CD4-positive, alpha-beta T cell (primary cell): ENCODE measurements at regions of chr11 and their contacts with region 1.

Region 1: DNA sequence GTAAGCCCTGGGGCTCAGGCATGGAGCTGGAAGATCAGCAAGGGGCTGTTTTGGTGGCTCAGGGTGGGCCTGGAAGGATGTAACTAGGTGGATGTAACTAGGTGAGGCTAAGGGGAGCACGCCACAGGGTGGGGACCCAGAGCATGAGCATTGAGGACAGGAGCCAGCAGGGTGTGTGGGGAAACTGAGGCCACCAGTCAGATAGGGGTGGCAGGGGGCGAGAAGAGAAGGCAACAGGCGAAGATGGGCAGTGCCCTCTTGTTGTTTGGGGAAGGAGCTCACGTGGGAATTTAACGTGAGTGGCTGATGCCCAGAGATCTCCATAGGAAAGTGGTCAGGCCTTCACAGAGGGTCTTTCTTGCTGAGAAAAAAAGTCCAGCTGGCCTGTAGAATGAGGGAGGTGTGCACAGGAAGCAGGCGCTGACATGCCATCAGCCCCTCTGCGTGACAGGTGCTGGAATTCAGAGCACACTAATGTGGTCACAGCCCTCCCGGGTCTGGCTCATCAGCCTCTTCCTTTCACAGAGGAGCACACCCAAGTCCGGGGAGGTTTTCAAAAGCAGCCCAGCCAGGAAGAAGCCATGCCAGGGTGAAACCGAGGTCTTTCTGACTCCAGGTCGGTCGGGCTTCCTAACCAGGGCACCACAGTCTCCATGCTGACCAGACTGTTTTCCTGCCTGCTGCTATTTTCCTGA is 54.6 kb upstream of the PAX6 start:
- DNase-seq: no peak
- ATAC-seq: no peak
- H3K4me3 ChIP-seq: no peak overlapping the region
- H3K4me3 Mint-ChIP-seq: no peak overlapping the region
- H3K27ac ChIP-seq: no peak overlapping the region
- H3K27ac Mint-ChIP-seq: no peak overlapping the region
- H3K4me1 ChIP-seq: no peaks in the 10 kb centered on the region
- H3K4me1 Mint-ChIP-seq: no peaks in the 10 kb centered on the region
- H3K27me3 ChIP-seq: peaks cover 3 to 8% of the 10 kb centered on the region in 2 experiments
- H3K27me3 Mint-ChIP-seq: peaks cover 58% of the 10 kb centered on the region
- CTCF ChIP-seq: no peak

Region 2: DNA sequence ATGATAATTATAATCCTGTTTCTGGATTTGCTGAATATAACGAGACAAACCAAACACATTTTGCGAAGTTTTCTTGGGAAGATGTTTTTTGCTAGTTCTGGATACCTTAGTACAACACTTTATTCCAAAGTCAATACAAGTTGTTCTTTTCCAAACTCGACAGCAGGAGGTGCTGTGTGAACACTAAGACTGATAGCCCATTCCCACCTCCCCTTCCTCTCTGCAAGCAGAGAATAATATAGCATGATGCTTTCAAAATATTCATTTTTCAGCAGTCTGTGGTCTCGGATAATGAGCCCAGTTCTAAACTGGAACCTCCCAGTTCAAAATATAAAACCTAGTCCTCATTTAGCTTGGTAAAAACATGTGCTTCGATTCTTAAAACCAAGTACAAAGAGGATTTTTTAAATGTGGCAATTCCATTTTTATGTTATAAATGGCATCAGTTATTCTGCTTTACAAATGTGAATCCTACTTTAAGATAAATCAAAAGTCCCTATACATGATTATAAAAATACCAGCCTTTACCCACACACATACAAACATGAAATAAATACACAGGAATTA is 625.3 kb before region 1 on chr11:
- CTCF ChIA-PET with region 1: interaction called, 3 read pairs
- POLR2A ChIA-PET with region 1: no interaction called
- intact Hi-C with region 1: loop called (anchors 2 to 5 kb)
- DNase-seq: peak in 7 of 14 experiments; percentile 0 to 59 (median 27)
- ATAC-seq: no peak
- H3K4me3 ChIP-seq: no peak overlapping the region
- H3K4me3 Mint-ChIP-seq: no peak overlapping the region
- H3K27ac ChIP-seq: no peak overlapping the region
- H3K27ac Mint-ChIP-seq: no peak overlapping the region
- H3K4me1 ChIP-seq: no peaks in the 10 kb centered on the region
- H3K4me1 Mint-ChIP-seq: no peaks in the 10 kb centered on the region
- H3K27me3 ChIP-seq: no peaks in the 10 kb centered on the region
- H3K27me3 Mint-ChIP-seq: peaks cover 5% of the 10 kb centered on the region
- CTCF ChIP-seq: peak; percentile 64

Region 3: DNA sequence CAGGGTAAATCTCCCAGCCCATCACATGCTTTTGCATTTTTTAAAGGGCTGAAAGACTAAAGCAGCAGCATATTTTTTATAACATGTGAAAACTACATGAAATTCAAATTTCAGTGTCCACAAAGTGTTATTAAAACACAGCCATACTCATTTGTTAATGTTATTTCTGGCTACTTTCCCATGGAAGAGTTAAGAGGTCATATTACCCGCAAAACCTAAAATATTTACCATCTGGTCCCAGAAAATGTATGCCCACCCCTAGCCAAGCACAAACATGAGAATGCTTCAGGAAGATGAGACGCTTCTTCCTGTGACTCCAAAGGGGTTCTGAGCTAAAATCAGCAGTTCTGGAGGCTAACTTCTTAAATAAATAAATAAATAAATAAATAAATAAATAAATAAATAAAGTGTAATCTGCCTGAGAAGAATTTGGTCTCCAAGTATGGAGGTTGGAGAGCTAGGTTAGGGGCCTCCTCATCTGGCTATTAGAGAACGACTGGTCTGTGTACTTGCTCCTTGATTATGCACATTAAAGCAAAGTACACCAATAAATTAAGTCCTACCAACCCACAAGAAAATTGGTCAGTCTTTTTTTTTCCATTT is 366.1 kb before region 1 on chr11:
- CTCF ChIA-PET with region 1: no interaction called
- POLR2A ChIA-PET with region 1: no interaction called
- intact Hi-C with region 1: no loop called
- DNase-seq: no peak
- ATAC-seq: no peak
- H3K4me3 ChIP-seq: no peak overlapping the region
- H3K4me3 Mint-ChIP-seq: no peak overlapping the region
- H3K27ac ChIP-seq: no peak overlapping the region
- H3K27ac Mint-ChIP-seq: no peak overlapping the region
- H3K4me1 ChIP-seq: no peaks in the 10 kb centered on the region
- H3K4me1 Mint-ChIP-seq: peaks cover 34% of the 10 kb centered on the region
- H3K27me3 ChIP-seq: no peaks in the 10 kb centered on the region
- H3K27me3 Mint-ChIP-seq: no peaks in the 10 kb centered on the region
- CTCF ChIP-seq: no peak